Activated B cell treated with CpG ODN at 0.5 μM for 24 hours (primary cell): ENCODE measurements at regions of chr16 and their contacts with region 1.

Region 1: DNA sequence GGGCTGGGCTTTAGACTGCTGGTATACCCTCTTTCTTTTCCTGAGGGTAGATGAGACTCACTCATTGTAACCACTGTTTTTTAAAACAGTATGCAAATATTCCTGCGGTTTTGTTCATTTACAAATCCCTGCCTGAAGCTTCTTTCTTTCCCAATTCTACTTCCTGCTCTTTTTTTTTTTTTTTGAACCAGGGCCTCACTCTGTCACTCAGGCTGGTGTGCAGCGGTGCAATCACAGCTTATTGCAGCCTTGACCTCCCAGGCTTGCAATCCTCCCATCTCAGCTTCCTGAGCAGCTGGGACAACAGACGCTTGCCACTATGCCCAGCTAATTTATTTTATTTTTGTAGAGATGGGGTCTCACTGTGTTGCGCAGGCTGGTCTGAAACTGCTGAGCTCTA is 8.0 kb upstream of the SULT1A1 start:
- DNase-seq: no peak
- ATAC-seq: no peak
- H3K4me3 Mint-ChIP-seq: no peak overlapping the region
- H3K27ac Mint-ChIP-seq: no peak overlapping the region
- H3K4me1 Mint-ChIP-seq: peaks cover 18% of the 10 kb centered on the region
- H3K27me3 Mint-ChIP-seq: no peaks in the 10 kb centered on the region
- CTCF ChIP-seq: no peak

Region 2: GRCh38 chr16:28553776-28554633 is 63.9 kb before region 1 on chr16 and contains the start of gene SGF29:
- CTCF ChIA-PET with region 1: no interaction called
- POLR2A ChIA-PET with region 1: no interaction called
- intact Hi-C with region 1: loop called (anchors 5 kb)
- DNase-seq: peak; percentile 86
- ATAC-seq: peak; percentile 90
- H3K4me3 Mint-ChIP-seq: peak within 1 kb of the TSS; percentile 91
- H3K27ac Mint-ChIP-seq: peak within 1 kb of the TSS; percentile 97
- H3K4me1 Mint-ChIP-seq: peaks cover 27% of the 10 kb centered on the region
- H3K27me3 Mint-ChIP-seq: peaks cover 4% of the 10 kb centered on the region
- CTCF ChIP-seq: no peak
- total RNA-seq, gene SGF29: 34.1 and 40.3 TPM in 2 replicates